Natural killer cell (primary cell): ENCODE measurements at regions of chr14 and their contacts with region 1.

Region 1: GRCh38 chr14:59189786-59190771 is 1.6 kb downstream of the DAAM1 start:
- DNase-seq: peak; percentile 64 to 86
- ATAC-seq: peak in 1 of 3 donors; percentile 11
- H3K4me3 ChIP-seq: peak overlapping the region; percentile 87
- H3K4me3 Mint-ChIP-seq: peak overlapping the region; percentile 98
- H3K27ac ChIP-seq: peak overlapping the region; percentile 96
- H3K27ac Mint-ChIP-seq: peak overlapping the region; percentile 89 to 96
- H3K4me1 ChIP-seq: peaks cover 22% of the 10 kb centered on the region
- H3K4me1 Mint-ChIP-seq: peaks cover 24 to 38% of the 10 kb centered on the region in 2 donors
- H3K27me3 ChIP-seq: peaks cover 4% of the 10 kb centered on the region
- H3K27me3 Mint-ChIP-seq: peaks cover 6 to 17% of the 10 kb centered on the region in 2 donors
- CTCF ChIP-seq: no peak

Region 2: DNA sequence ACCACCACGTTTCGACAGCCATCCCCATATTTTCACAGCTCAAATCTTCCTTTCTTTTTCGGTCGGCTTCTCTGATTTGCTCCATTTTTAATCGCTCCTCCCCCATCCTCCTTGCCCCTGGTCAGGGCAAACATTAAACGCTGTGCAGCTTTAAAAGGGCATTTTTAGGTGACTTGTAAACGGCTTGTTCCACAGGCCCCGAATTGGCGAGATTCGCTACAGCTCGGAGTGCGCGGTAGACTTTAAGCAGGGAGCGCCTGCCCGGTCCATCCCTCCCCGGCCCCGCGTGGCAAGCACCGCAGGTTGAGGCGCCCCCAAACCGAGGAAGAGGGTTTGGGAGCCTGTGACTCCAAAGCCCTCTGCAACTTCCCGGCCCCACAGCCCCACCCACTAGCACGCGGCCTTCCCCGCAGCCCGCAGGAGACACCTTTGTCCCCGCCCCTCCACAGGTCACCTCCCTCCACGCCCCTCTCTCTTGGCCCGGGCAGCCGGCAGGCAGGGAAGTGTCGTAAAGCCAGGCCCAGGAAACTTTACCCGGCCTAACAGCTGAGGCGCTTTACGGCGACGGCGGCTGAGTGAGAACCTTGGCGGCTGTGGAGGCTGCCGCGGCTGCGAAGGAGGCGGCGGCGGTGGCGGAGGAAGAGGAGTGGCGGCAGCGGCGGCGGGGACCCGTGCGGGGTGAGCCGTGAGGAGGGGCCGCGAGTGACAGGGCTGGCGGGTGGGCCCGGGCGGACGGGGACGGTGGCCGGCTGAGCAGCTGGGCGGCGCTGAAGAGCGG is 1799.9 kb before region 1 on chr14 and contains the start of gene NAA30:
- intact Hi-C with region 1: loop called (anchors 5 kb)
- DNase-seq: peak; percentile 87 to 96
- ATAC-seq: peak; percentile 87 to 97 (median 87)
- H3K4me3 ChIP-seq: peak within 1 kb of the TSS; percentile 60
- H3K4me3 Mint-ChIP-seq: peak within 1 kb of the TSS; percentile 94
- H3K27ac ChIP-seq: peak within 1 kb of the TSS; percentile 75
- H3K27ac Mint-ChIP-seq: peak within 1 kb of the TSS; percentile 90 to 98
- H3K4me1 ChIP-seq: peaks cover 23% of the 10 kb centered on the region
- H3K4me1 Mint-ChIP-seq: peaks cover 43 to 50% of the 10 kb centered on the region in 2 donors
- H3K27me3 ChIP-seq: no peaks in the 10 kb centered on the region
- H3K27me3 Mint-ChIP-seq: peaks cover 0 to 3% of the 10 kb centered on the region in 2 donors
- CTCF ChIP-seq: no peak
- total RNA-seq, gene NAA30: 17.1 to 32.6 (median 24.0) TPM

Region 3: DNA sequence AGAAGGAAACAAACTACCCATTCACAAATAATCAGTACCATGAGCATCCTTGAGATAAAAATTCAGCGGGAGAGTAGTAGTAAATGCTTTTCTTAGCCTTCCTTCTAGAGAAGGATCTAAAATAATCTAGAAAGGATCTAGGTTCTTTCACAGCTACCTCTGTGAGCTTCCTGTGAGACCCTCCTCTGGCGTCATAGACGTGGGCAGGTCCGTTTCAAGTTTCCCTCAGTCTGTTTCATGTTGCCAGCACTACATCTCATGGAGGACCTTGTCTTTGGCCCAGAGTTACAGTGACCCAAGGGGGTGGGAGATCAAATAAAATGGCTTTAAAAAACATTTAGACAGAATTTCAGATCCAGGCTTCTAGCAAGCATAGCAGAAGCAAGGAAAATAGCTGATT is 12.0 kb after region 1 on chr14:
- intact Hi-C with region 1: loop called (anchors 1 kb)
- DNase-seq: peak; percentile 45 to 49
- ATAC-seq: peak; percentile 87 to 99 (median 98)
- H3K4me3 ChIP-seq: no peak overlapping the region
- H3K4me3 Mint-ChIP-seq: peak overlapping the region; percentile 32
- H3K27ac ChIP-seq: peak overlapping the region; percentile 28
- H3K27ac Mint-ChIP-seq: peak overlapping the region; percentile 81 to 83
- H3K4me1 ChIP-seq: peaks cover 8% of the 10 kb centered on the region
- H3K4me1 Mint-ChIP-seq: peaks cover 21 to 22% of the 10 kb centered on the region in 2 donors
- H3K27me3 ChIP-seq: no peaks in the 10 kb centered on the region
- H3K27me3 Mint-ChIP-seq: no peaks in the 10 kb centered on the region
- CTCF ChIP-seq: no peak

Region 4: GRCh38 chr14:59483900-59484638 is 294.0 kb after region 1 on chr14 and contains the starts of genes JKAMP and L3HYPDH:
- intact Hi-C with region 1: loop called (anchors 2 kb)
- DNase-seq: peak; percentile 97 to 98
- ATAC-seq: peak; percentile 93 to 96 (median 94)
- H3K4me3 ChIP-seq: peak within 1 kb of the TSS; percentile 80
- H3K4me3 Mint-ChIP-seq: peak within 1 kb of the TSS; percentile 93
- H3K27ac ChIP-seq: peak within 1 kb of the TSS; percentile 62
- H3K27ac Mint-ChIP-seq: peak within 1 kb of the TSS; percentile 86
- H3K4me1 ChIP-seq: peaks cover 24% of the 10 kb centered on the region
- H3K4me1 Mint-ChIP-seq: peaks cover 46 to 58% of the 10 kb centered on the region in 2 donors
- H3K27me3 ChIP-seq: no peaks in the 10 kb centered on the region
- H3K27me3 Mint-ChIP-seq: no peaks in the 10 kb centered on the region
- CTCF ChIP-seq: peak; percentile 38
- total RNA-seq, gene JKAMP: 18.8 to 25.0 (median 20.5) TPM
- total RNA-seq, gene L3HYPDH: 13.3 to 18.8 (median 16.5) TPM

Region 5: GRCh38 chr14:60151715-60152114 is 961.6 kb after region 1 on chr14:
- intact Hi-C with region 1: loop called (anchors 10 kb)
- DNase-seq: peak; percentile 68 to 83
- ATAC-seq: peak; percentile 92 to 98 (median 97)
- H3K4me3 ChIP-seq: no peak overlapping the region
- H3K4me3 Mint-ChIP-seq: peak overlapping the region; percentile 71
- H3K27ac ChIP-seq: peak overlapping the region; percentile 77
- H3K27ac Mint-ChIP-seq: peak overlapping the region; percentile 96 to 97
- H3K4me1 ChIP-seq: peaks cover 28% of the 10 kb centered on the region
- H3K4me1 Mint-ChIP-seq: peaks cover 52% of the 10 kb centered on the region in 2 donors
- H3K27me3 ChIP-seq: no peaks in the 10 kb centered on the region
- H3K27me3 Mint-ChIP-seq: no peaks in the 10 kb centered on the region
- CTCF ChIP-seq: no peak